ENCODE measurements at regions of chr19 and their contacts with region 1.

Region 1: GRCh38 chr19:12722566-12723380 is 959 bp downstream of the TNPO2 start:
- DNase-seq: peak; percentile 92 to 99
- H3K4me3 ChIP-seq: peak overlapping the region; percentile 81 to 95
- H3K27ac ChIP-seq: peak overlapping the region; percentile 88 to 98
- H3K4me1 ChIP-seq: peaks cover 4 to 29% of the 10 kb centered on the region in 2 donors
- H3K27me3 ChIP-seq: no peaks in the 10 kb centered on the region
- CTCF ChIP-seq: no peak

Region 2: GRCh38 chr19:12180377-12180776 is 542.4 kb before region 1 on chr19:
- intact Hi-C with region 1: no loop called
- DNase-seq: no peak
- H3K4me3 ChIP-seq: no peak overlapping the region
- H3K27ac ChIP-seq: no peak overlapping the region
- H3K4me1 ChIP-seq: no peaks in the 10 kb centered on the region
- H3K27me3 ChIP-seq: no peaks in the 10 kb centered on the region
- CTCF ChIP-seq: no peak

Region 3: DNA sequence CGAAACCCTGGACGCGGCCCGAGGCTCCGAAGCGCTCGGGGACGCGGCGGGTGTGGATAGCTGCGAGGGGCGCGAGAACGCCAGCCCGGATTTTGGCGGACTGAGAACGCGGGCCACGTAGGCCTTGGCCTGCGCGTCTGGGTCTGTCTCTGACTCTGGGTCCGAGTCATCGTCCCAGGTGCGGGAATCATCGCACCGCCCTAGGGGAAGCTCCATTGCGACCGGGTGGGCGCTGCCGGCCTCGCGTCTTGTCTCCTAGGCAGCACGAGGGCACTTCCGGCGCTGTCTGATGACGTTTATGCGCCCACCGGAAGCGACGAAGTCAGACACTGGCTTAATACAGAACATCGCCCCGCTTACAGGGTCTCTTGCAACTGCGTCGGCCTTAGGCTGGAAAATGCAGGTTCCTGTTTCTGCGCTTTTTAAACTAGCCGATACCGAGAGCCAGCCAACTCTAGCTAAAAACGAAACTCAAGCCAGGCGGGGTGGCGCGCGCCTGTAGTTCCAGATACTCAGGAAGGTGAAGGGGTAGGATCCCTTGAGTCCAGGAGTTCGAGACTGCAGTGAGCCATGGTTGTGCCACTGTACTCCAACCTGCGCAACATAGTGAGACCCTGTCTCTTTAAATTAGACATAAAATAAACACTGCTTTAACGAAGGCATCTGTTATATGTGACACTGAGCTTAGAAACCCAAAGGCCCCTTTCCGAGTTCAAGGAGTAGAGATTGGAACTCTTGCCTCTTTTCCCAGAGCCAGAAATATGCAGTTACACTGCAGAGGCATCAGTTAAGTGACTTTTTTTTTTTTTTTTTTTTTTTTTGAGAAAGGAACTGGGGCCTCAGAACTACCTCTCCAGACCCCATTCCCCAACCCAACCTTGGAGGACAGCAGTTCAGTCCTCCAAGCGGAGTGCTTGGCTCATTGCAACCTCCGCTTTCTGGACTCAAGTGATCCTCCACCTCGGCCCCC is 26.1 kb before region 1 on chr19 and contains the start of gene FBXW9:
- intact Hi-C with region 1: loop called (anchors 2 kb)
- DNase-seq: peak; percentile 87 to 98
- H3K4me3 ChIP-seq: peak within 1 kb of the TSS; percentile 91 to 96
- H3K27ac ChIP-seq: peak within 1 kb of the TSS; percentile 87 to 92
- H3K4me1 ChIP-seq: peaks cover 5 to 13% of the 10 kb centered on the region in 2 donors
- H3K27me3 ChIP-seq: no peaks in the 10 kb centered on the region
- CTCF ChIP-seq: no peak
- total RNA-seq, gene FBXW9: 7.6 TPM

Region 4: DNA sequence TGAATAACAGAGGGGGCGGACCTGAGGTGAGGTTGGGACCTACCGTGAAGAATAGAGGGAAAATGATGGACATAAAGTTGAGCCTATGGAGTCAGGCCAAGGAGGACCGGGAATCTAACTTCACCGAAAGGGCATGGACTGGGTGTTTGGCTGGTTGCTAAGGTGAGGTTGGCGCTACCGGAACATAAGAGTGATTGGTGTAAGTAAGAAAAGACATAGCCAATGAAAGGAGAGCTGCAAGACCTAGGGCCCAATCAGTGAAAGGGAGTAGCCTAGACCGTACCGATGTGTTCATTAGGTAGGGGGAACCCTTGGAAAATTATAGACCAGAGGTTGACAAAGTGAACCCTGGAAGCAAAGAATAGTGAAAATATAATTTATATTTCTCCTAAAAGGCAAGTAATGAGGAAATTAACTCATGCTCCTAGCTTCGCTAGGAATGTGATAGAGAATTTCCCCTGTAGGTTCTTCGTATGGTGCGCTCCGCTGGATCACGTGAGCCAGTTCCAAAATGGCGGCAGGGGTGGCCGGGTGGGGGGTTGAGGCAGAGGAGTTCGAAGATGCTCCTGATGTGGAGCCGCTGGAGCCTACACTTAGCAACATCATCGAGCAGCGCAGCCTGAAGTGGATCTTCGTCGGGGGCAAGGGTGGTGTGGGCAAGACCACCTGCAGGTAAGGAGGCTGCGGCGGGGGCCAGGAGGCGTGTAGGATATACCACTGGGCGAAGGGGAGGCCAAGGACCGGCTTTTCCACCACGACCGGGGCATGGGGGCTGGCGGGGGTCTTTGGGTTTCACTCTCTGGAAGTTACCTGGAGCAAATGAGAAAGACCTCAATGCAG is 14.4 kb after region 1 on chr19 and contains the start of gene GET3:
- intact Hi-C with region 1: loop called (anchors 1 kb)
- DNase-seq: peak; percentile 93 to 98
- H3K4me3 ChIP-seq: peak within 1 kb of the TSS; percentile 70 to 80
- H3K27ac ChIP-seq: peak within 1 kb of the TSS; percentile 78 to 90
- H3K4me1 ChIP-seq: peaks cover 20 to 28% of the 10 kb centered on the region in 2 donors
- H3K27me3 ChIP-seq: no peaks in the 10 kb centered on the region
- CTCF ChIP-seq: peak in 2 of 3 experiments; percentile 5 to 15
- total RNA-seq, gene GET3: 43.6 TPM

Region 5: GRCh38 chr19:12777217-12778016 is 54.6 kb after region 1 on chr19:
- intact Hi-C with region 1: no loop called
- DNase-seq: peak; percentile 43 to 89
- H3K4me3 ChIP-seq: peak overlapping the region; percentile 68 to 70
- H3K27ac ChIP-seq: peak overlapping the region; percentile 93 to 96
- H3K4me1 ChIP-seq: peaks cover 21 to 49% of the 10 kb centered on the region in 2 donors
- H3K27me3 ChIP-seq: no peaks in the 10 kb centered on the region
- CTCF ChIP-seq: peak; percentile 97 to 98 (median 98)

Region 6: DNA sequence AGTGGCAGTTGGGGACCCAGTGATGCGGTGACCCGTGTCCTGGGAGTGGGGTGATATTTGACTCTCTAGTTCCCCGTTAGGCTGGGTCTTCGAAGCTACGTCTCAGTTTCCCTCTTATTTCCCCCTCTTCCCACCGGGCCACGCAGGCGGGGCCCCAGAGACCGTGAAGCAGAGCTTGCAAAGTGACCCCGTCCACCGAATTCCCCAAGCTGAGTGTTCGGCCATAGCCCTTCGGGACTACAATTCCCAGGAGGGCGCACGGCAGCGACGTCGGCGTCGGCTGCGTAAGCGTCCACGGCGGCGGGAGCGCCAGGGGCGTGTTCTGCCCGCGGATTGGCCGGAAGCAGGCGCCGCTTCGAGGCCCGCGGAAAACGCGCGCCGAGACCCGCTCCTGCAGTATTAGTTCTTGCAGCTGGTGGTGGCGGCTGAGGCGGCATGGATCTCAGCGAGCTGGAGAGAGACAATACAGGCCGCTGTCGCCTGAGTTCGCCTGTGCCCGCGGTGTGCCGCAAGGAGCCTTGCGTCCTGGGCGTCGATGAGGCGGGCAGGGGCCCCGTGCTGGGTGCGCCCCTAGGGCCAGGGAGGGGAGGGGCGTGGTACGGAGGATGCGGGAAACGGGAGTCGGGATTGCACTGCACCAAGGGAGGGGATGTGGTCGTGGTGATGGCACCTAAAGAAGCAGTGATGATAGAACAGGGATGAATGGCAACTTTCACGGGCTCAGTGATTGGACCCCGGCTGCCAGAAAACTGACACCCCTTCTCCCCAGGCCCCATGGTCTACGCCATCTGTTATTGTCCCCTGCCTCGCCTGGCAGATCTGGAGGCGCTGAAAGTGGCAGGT is 83.7 kb after region 1 on chr19 and contains the start of gene RNASEH2A:
- intact Hi-C with region 1: no loop called
- DNase-seq: peak in 1 of 2 donors; percentile 94
- H3K4me3 ChIP-seq: peak within 1 kb of the TSS; percentile 61 to 71
- H3K27ac ChIP-seq: peak within 1 kb of the TSS; percentile 6 to 31
- H3K4me1 ChIP-seq: peaks cover 3 to 8% of the 10 kb centered on the region in 2 donors
- H3K27me3 ChIP-seq: no peaks in the 10 kb centered on the region
- CTCF ChIP-seq: peak in 1 of 3 experiments; percentile 6
- total RNA-seq, gene RNASEH2A: 3.4 TPM

Measured in ascending aorta (tissue), 2 donors.